A673 (cell line): ENCODE measurements at regions of chr7 and their contacts with region 1.

Region 1: DNA sequence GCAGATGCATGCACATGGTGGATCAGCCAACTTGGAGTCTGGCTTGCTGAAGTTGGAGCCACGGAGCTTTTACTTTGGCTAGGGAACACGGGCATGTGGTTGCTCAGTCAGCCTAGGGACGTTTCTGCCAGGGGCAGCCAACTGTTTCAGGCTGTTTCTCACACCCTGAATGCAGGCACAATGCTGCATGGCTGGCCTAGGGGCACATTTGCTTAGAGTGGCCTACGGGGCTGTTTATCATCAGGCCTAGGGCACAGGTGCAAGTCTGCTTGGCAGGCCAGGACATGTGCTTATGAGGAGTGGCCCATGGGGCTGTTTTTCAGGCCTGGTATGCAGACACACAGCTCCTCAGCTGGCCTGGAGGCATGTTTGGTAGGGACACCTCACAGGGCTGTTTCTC is 107.4 kb downstream of the GSAP start:
- DNase-seq: no peak
- H3K4me3 ChIP-seq: no peak overlapping the region
- H3K27ac ChIP-seq: no peak overlapping the region
- H3K4me1 ChIP-seq: no peaks in the 10 kb centered on the region
- H3K27me3 ChIP-seq: no peaks in the 10 kb centered on the region
- CTCF ChIP-seq: no peak

Region 2: DNA sequence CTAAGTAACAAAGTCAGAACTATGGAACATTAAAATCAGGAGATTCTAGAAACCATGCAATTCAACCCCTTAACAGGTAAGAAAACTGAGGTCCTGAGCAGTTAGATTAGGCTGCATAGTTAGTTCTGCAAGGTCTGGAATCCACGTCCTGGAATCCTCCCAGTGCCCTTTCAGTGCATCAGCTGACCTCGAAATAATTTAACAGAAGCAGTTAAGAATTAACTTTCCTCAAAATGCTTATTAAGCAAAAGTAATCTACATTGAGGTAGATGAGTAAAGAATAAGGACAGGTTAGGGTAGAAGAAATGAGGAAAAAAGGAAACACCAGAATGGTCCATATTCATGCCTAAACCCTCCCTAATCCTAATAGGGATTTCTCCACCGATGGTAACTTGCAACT is 69.8 kb after region 1 on chr7:
- CTCF ChIA-PET with region 1: no interaction called
- POLR2A ChIA-PET with region 1: interaction called, 10 read pairs
- intact Hi-C with region 1: no loop called
- DNase-seq: no peak
- H3K4me3 ChIP-seq: no peak overlapping the region
- H3K27ac ChIP-seq: no peak overlapping the region
- H3K4me1 ChIP-seq: no peaks in the 10 kb centered on the region
- H3K27me3 ChIP-seq: peaks cover 22% of the 10 kb centered on the region
- CTCF ChIP-seq: no peak

Region 3: GRCh38 chr7:77651573-77652162 is 342.9 kb after region 1 on chr7:
- CTCF ChIA-PET with region 1: no interaction called
- POLR2A ChIA-PET with region 1: no interaction called
- intact Hi-C with region 1: no loop called
- DNase-seq: peak; percentile 58
- H3K4me3 ChIP-seq: no peak overlapping the region
- H3K27ac ChIP-seq: no peak overlapping the region
- H3K4me1 ChIP-seq: no peaks in the 10 kb centered on the region
- H3K27me3 ChIP-seq: no peaks in the 10 kb centered on the region
- CTCF ChIP-seq: peak; percentile 72